Naive thymus-derived CD4-positive, alpha-beta T cell (primary cell): ENCODE measurements at regions of chr2 and their contacts with region 1.

Region 1: DNA sequence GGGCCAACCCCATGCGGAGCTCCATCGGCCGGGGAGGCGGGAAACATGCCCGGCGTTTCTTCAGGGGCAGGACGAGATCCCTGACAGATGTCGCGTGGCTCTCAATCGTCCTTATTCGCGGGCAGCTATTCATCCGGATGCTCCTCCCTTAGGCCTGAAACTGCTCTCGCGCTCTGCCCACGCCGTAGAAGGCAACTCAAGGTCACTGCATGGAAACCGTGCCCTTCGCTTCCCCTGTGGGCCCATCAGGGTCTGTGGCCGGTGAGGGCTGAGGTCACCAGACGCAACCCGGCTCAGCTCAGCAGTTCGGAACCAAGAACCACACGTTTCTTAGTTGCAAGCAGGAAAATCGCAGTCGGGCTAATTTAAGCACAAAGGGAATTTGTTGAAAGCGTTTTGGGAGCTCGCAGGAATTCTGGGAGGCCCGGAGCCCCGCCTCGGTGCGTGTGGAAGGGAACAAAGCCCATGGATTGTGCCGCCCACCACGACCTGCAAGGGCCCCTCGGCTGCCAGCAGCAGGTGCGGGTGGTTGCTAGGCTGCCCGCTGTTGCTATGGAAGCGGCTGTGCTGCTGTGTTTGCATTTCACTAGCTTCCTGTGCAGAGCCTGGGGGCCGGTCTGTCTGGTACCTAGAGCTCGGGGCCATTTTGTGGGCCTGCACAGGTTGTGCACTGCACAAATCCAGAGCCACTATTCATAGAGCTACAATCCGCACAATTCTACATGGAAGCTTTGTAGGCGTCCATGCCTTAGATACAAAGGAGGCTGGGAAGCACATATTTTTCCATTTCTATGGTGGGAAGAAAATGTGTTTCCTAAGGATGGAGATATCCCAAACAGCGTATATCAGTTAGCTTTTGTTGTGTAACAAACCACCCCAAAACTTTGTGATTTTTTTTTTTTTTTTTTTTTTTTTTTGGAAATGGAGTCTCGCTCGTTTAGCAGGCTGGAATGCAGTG is 6.0 kb upstream of the ALLC start:
- DNase-seq: peak; percentile 29 to 87 (median 77)
- ATAC-seq: peak; percentile 74
- H3K4me3 ChIP-seq: peak overlapping the region; percentile 73
- H3K4me3 Mint-ChIP-seq: peak overlapping the region; percentile 78 to 94 (median 87)
- H3K27ac ChIP-seq: peak overlapping the region; percentile 4
- H3K27ac Mint-ChIP-seq: peak overlapping the region; percentile 58 to 98 (median 90)
- H3K4me1 ChIP-seq: no peaks in the 10 kb centered on the region
- H3K4me1 Mint-ChIP-seq: peaks cover 5 to 18% (median 9%) of the 10 kb centered on the region in 7 donors
- H3K27me3 ChIP-seq: no peaks in the 10 kb centered on the region
- H3K27me3 Mint-ChIP-seq: no peaks in the 10 kb centered on the region

Region 2: DNA sequence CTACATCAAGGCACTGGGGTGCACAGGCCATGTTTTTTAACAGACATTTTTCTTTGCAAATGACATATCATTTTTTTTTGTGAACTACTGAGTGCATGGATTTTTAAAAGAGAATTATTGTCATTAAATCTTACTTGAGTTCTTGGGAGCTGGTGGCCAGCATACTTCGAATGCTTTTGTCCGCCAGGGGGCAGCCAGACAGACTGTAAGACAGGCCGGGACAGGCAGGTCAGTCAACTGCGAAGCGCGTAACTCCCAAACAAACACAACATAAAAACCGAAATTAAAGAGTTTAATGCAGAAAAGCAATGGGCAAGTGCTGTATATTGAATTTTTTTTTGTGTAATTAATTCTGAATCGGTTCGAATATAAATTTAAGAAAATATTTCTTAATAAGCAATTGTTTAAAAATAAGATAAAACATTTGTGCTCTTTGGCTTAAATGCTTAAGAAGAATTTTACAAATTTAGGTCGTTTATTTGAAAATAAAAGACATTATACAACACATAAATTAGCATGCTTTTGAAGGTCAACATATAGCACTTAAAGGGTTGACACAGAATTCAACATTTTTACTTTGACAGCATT is 1765.5 kb before region 1 on chr2:
- CTCF ChIA-PET with region 1: no interaction called
- POLR2A ChIA-PET with region 1: no interaction called
- intact Hi-C with region 1: loop called in 1 of 2 experiments (anchors 2 kb)
- DNase-seq: peak in 5 of 9 donors; percentile 5 to 25 (median 14)
- ATAC-seq: no peak
- H3K4me3 ChIP-seq: no peak overlapping the region
- H3K4me3 Mint-ChIP-seq: no peak overlapping the region
- H3K27ac ChIP-seq: no peak overlapping the region
- H3K27ac Mint-ChIP-seq: no peak overlapping the region
- H3K4me1 ChIP-seq: no peaks in the 10 kb centered on the region
- H3K4me1 Mint-ChIP-seq: peaks cover 0 to 3% (median 0%) of the 10 kb centered on the region in 7 donors
- H3K27me3 ChIP-seq: no peaks in the 10 kb centered on the region
- H3K27me3 Mint-ChIP-seq: peaks cover 6 to 37% (median 18%) of the 10 kb centered on the region in 5 donors

Region 3: GRCh38 chr2:3242747-3243369 is 409.1 kb before region 1 on chr2:
- CTCF ChIA-PET with region 1: no interaction called
- POLR2A ChIA-PET with region 1: no interaction called
- intact Hi-C with region 1: loop called in 1 of 2 experiments (anchors 5 kb)
- DNase-seq: peak in 7 of 9 donors; percentile 62 to 79 (median 74)
- ATAC-seq: peak; percentile 90
- H3K4me3 ChIP-seq: peak overlapping the region; percentile 12
- H3K4me3 Mint-ChIP-seq: peak overlapping the region in 9 of 10 donors; percentile 29 to 86 (median 70)
- H3K27ac ChIP-seq: peak overlapping the region; percentile 69
- H3K27ac Mint-ChIP-seq: peak overlapping the region in 6 of 9 donors; percentile 72 to 93 (median 86)
- H3K4me1 ChIP-seq: peaks cover 33 to 59% of the 10 kb centered on the region in 2 donors
- H3K4me1 Mint-ChIP-seq: peaks cover 17 to 36% (median 23%) of the 10 kb centered on the region in 7 donors
- H3K27me3 ChIP-seq: no peaks in the 10 kb centered on the region
- H3K27me3 Mint-ChIP-seq: no peaks in the 10 kb centered on the region

Region 4: DNA sequence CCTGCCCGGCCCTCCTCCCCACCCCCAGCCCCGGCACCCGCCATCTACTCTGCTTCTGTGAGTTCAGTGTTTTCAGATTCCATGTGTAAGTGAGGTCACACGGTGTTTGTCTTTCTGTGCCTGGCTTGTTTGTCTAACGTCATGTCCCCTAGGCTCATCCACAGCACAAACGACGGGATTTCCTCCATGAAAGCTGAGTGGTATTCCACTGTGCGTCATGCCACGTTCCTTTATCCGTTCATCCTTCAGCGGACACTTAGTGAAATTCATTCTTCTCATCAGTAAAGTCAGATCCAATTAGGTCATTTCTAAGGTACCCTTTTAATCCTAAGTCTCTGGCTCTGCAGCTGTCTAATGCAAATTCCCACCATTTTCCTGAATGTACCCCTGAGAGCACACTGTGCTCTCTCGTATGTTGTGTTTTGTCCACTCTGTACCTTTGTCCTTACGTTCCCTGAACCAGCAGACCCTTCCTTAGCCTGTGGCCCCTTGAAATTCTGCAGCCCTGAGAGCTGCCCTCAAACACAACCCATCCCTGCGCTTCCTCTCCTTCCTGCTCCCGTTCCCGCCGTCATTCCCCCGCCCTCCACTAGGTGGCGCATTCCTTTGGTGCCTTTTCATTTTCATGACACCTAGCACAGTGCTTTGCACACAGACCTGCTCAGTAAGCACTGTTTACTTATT is 228.3 kb before region 1 on chr2:
- CTCF ChIA-PET with region 1: interaction called, 28 read pairs
- POLR2A ChIA-PET with region 1: no interaction called
- intact Hi-C with region 1: loop called (anchors 1 kb)
- DNase-seq: peak; percentile 46 to 82 (median 61)
- ATAC-seq: peak; percentile 85
- H3K4me3 ChIP-seq: no peak overlapping the region
- H3K4me3 Mint-ChIP-seq: no peak overlapping the region
- H3K27ac ChIP-seq: no peak overlapping the region
- H3K27ac Mint-ChIP-seq: peak overlapping the region in 6 of 9 donors; percentile 33 to 85 (median 66)
- H3K4me1 ChIP-seq: no peaks in the 10 kb centered on the region
- H3K4me1 Mint-ChIP-seq: peaks cover 0 to 13% (median 6%) of the 10 kb centered on the region in 7 donors
- H3K27me3 ChIP-seq: no peaks in the 10 kb centered on the region
- H3K27me3 Mint-ChIP-seq: no peaks in the 10 kb centered on the region

Region 5: GRCh38 chr2:3483227-3483985 is 168.6 kb before region 1 on chr2:
- CTCF ChIA-PET with region 1: no interaction called
- POLR2A ChIA-PET with region 1: no interaction called
- intact Hi-C with region 1: no loop called
- DNase-seq: peak in 4 of 9 donors; percentile 8 to 44 (median 22)
- ATAC-seq: peak; percentile 58
- H3K4me3 ChIP-seq: no peak overlapping the region
- H3K4me3 Mint-ChIP-seq: peak overlapping the region in 5 of 10 donors; percentile 32 to 51 (median 42)
- H3K27ac ChIP-seq: no peak overlapping the region
- H3K27ac Mint-ChIP-seq: peak overlapping the region in 3 of 9 donors; percentile 31 to 43 (median 41)
- H3K4me1 ChIP-seq: no peaks in the 10 kb centered on the region
- H3K4me1 Mint-ChIP-seq: peaks cover 2 to 39% (median 26%) of the 10 kb centered on the region in 7 donors
- H3K27me3 ChIP-seq: no peaks in the 10 kb centered on the region
- H3K27me3 Mint-ChIP-seq: no peaks in the 10 kb centered on the region

Region 6: GRCh38 chr2:3536682-3537632 is 115.0 kb before region 1 on chr2:
- CTCF ChIA-PET with region 1: no interaction called
- POLR2A ChIA-PET with region 1: no interaction called
- intact Hi-C with region 1: loop called in 1 of 2 experiments (anchors 1 kb)
- DNase-seq: no peak
- ATAC-seq: peak; percentile 68
- H3K4me3 ChIP-seq: peak overlapping the region; percentile 41
- H3K4me3 Mint-ChIP-seq: peak overlapping the region; percentile 72 to 84 (median 76)
- H3K27ac ChIP-seq: peak overlapping the region; percentile 42
- H3K27ac Mint-ChIP-seq: peak overlapping the region; percentile 45 to 85 (median 68)
- H3K4me1 ChIP-seq: no peaks in the 10 kb centered on the region
- H3K4me1 Mint-ChIP-seq: peaks cover 0 to 7% (median 3%) of the 10 kb centered on the region in 7 donors
- H3K27me3 ChIP-seq: no peaks in the 10 kb centered on the region
- H3K27me3 Mint-ChIP-seq: no peaks in the 10 kb centered on the region

Region 7: DNA sequence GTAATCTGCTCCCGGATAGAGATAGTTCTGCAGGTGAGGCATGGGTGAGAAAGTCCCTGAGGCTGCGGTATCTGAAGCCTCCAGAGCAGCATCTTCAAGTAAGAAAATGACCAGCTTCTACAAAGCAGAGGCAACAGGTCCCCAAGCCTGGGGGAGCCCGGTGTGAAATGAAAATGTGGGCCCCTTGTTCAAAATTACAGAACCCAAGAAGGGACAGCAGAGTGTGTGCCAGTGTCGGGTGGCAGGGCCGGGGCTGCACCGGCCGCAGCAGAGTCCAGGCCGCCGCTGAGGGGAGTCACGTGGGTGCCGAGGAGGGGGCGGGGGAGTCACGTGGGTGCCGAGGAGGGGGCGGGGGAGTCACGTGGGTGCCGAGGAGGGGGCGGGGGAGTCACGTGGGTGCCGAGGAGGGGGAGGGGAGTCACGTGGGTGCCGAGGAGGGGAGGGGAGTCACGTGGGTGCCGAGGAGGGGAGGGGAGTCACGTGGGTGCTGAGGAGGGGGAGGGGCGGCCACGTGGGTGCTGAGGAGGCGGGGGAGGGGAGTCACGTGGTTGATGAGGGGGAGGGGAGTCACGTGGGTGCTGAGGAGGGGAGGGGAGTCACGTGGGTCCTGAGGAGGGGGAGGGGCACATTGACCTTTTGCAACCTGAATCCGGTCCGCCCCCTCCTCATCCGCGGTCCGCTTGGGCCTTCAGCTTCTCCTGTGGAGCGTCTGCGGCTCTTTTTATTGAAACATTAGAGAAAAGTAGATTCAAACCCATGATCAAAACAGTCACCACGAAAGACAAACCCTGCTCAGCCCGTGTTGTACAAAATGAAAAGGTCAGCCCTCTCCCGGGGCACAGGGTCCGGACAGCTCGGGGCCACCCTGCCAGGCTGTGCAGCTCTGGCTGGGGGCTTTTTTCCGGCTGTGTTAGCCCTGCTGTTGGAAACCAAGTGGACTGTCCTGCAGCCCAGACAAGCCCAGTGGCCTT is 46.7 kb before region 1 on chr2:
- CTCF ChIA-PET with region 1: interaction called, 4 read pairs
- POLR2A ChIA-PET with region 1: interaction called, 12 read pairs
- intact Hi-C with region 1: loop called in 1 of 2 experiments (anchors 1 kb)
- DNase-seq: peak in 7 of 9 donors; percentile 11 to 65 (median 48)
- ATAC-seq: no peak
- H3K4me3 ChIP-seq: no peak overlapping the region
- H3K4me3 Mint-ChIP-seq: peak overlapping the region in 7 of 10 donors; percentile 18 to 84 (median 75)
- H3K27ac ChIP-seq: no peak overlapping the region
- H3K27ac Mint-ChIP-seq: peak overlapping the region in 6 of 9 donors; percentile 8 to 94 (median 88)
- H3K4me1 ChIP-seq: peaks cover 0 to 6% of the 10 kb centered on the region in 2 donors
- H3K4me1 Mint-ChIP-seq: peaks cover 2 to 35% (median 5%) of the 10 kb centered on the region in 7 donors
- H3K27me3 ChIP-seq: no peaks in the 10 kb centered on the region
- H3K27me3 Mint-ChIP-seq: no peaks in the 10 kb centered on the region